ENCODE measurements at regions of chr4 and their contacts with region 1.

Region 1: DNA sequence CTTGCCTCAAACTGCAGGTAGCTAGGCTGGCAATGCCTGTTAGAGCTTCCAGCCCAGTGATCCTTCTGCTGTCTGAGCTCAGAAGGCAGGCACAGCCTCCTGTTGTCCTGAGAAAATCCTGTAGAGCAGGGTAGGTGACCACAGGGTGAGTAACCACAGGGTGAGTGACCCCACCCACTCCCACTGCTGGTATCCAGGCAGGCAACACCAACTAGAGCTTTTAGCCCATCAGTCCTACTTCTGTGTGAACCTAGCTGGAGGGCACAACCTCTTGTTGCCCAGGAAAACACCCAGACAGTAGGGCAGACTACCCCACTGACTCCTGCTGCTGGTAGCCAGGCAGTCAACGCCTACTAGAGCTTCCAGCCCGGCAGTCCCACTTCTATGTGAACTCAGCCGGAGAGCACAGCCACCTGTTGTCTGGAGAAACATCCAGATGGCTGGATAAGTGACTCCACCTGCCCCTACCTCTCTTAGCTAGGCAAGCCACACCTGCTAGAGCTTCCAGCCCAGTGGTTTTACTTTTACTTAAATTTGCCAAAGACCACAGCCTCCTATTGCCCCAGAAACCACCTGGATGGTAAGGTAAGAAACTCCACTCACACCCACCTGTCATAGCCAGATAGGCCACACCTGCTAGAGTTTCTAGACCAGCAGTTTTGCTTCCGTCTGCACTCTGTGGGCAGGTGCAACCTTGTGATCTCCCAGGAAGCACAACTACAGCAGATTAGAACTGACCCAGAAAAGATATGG is 371.6 kb downstream of the INPP4B start:
- DNase-seq: peak; percentile 93 to 98
- H3K4me3 ChIP-seq: peak overlapping the region; percentile 74; the same call in 1 of the 2 replicates
- H3K27ac ChIP-seq: peak overlapping the region; percentile 100
- H3K4me1 ChIP-seq: peaks cover 57% of the 10 kb centered on the region
- H3K27me3 ChIP-seq: no peaks in the 10 kb centered on the region
- CTCF ChIP-seq: no peak

Region 2: GRCh38 chr4:142126890-142127497 is 347.5 kb before region 1 on chr4:
- CTCF ChIA-PET with region 1: no interaction called
- POLR2A ChIA-PET with region 1: no interaction called
- intact Hi-C with region 1: loop called (anchors 10 kb)
- DNase-seq: peak; percentile 38 to 46
- H3K4me3 ChIP-seq: no peak overlapping the region
- H3K27ac ChIP-seq: no peak overlapping the region
- H3K4me1 ChIP-seq: no peaks in the 10 kb centered on the region
- H3K27me3 ChIP-seq: no peaks in the 10 kb centered on the region
- CTCF ChIP-seq: peak; percentile 89

Region 3: GRCh38 chr4:142379277-142380057 is 95.0 kb before region 1 on chr4:
- CTCF ChIA-PET with region 1: no interaction called
- POLR2A ChIA-PET with region 1: no interaction called
- intact Hi-C with region 1: loop called (anchors 1 kb)
- DNase-seq: peak; percentile 24 to 89
- H3K4me3 ChIP-seq: no peak overlapping the region
- H3K27ac ChIP-seq: peak overlapping the region; percentile 93
- H3K4me1 ChIP-seq: peaks cover 34% of the 10 kb centered on the region
- H3K27me3 ChIP-seq: no peaks in the 10 kb centered on the region
- CTCF ChIP-seq: no peak

Region 4: DNA sequence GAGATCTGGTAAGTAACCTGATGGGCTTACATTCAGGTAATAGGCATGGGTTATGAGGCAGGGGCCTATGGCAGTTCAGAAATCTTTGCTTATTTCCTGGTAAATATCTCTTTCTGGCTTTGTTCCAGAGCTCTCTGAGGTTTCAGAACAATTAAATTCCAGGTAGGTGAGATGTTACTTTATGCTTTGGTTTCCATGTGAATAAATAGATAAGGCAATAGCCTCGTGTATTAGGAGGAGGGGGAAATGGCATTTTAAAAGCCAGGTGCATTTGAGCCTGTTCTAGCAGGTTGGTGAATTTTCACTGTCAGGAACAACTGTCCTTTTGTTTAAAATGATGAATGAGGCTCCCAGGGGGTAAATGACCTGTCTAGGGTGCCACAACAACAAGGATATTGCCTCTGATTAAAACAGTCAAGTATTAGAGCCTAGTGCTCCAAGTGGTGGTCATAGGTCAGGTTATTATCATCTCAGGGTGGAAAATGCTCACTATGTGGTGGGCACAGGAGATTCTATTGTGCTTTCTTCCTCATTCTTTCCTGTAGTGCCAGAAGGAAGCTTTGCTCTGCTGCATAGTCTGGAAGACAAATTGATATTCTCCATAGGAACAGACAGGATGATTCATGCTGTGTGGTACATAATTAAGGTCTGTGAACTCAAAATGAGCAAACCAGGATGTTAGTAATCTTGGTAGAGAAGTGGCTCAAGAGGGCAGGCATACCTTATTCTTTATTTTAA is 75.4 kb after region 1 on chr4:
- CTCF ChIA-PET with region 1: interaction called, 5 read pairs
- POLR2A ChIA-PET with region 1: interaction called, 31 read pairs
- intact Hi-C with region 1: loop called (anchors 1 kb)
- DNase-seq: peak; percentile 67 to 98
- H3K4me3 ChIP-seq: no peak overlapping the region
- H3K27ac ChIP-seq: peak overlapping the region; percentile 99
- H3K4me1 ChIP-seq: peaks cover 48% of the 10 kb centered on the region
- H3K27me3 ChIP-seq: no peaks in the 10 kb centered on the region
- CTCF ChIP-seq: no peak

Region 5: GRCh38 chr4:142582340-142582739 is 107.8 kb after region 1 on chr4:
- CTCF ChIA-PET with region 1: no interaction called
- POLR2A ChIA-PET with region 1: no interaction called
- intact Hi-C with region 1: no loop called
- DNase-seq: no peak
- H3K4me3 ChIP-seq: no peak overlapping the region
- H3K27ac ChIP-seq: no peak overlapping the region
- H3K4me1 ChIP-seq: no peaks in the 10 kb centered on the region
- H3K27me3 ChIP-seq: no peaks in the 10 kb centered on the region
- CTCF ChIP-seq: no peak

Region 6: GRCh38 chr4:142778430-142778829 is 303.9 kb after region 1 on chr4:
- CTCF ChIA-PET with region 1: no interaction called
- POLR2A ChIA-PET with region 1: no interaction called
- intact Hi-C with region 1: no loop called
- DNase-seq: no peak
- H3K4me3 ChIP-seq: no peak overlapping the region
- H3K27ac ChIP-seq: no peak overlapping the region
- H3K4me1 ChIP-seq: peaks cover 6% of the 10 kb centered on the region; the same call in 1 of the 2 replicates
- H3K27me3 ChIP-seq: no peaks in the 10 kb centered on the region
- CTCF ChIP-seq: no peak

Region 7: DNA sequence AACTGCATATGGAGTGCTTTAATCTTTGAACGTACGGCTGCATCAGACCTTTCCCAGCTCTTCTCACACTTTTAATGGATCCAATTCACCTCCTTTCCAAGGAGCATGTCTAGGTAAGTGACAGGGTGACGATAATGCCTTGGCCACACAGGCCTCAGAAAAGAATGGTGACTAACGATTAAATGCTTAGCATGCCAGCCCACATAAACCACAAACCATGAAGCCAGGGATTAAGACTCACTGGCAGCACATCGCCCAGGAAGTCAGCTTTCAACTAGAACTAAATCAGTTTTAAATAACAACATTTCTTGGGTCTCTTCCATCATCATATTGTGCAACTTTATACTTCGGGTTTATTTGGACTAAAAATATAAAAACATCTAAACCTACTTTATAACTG is 342.9 kb after region 1 on chr4:
- CTCF ChIA-PET with region 1: no interaction called
- POLR2A ChIA-PET with region 1: no interaction called
- intact Hi-C with region 1: loop called (anchors 2 kb)
- DNase-seq: peak; percentile 59 to 80
- H3K4me3 ChIP-seq: peak overlapping the region; percentile 10; the same call in 1 of the 2 replicates
- H3K27ac ChIP-seq: peak overlapping the region; percentile 50
- H3K4me1 ChIP-seq: peaks cover 15% of the 10 kb centered on the region
- H3K27me3 ChIP-seq: no peaks in the 10 kb centered on the region
- CTCF ChIP-seq: no peak

Region 8: GRCh38 chr4:143335979-143336780 is 861.7 kb after region 1 on chr4:
- CTCF ChIA-PET with region 1: no interaction called
- POLR2A ChIA-PET with region 1: interaction called, 17 read pairs
- intact Hi-C with region 1: no loop called
- DNase-seq: peak; percentile 62 to 90
- H3K4me3 ChIP-seq: peak overlapping the region; percentile 88
- H3K27ac ChIP-seq: peak overlapping the region; percentile 78
- H3K4me1 ChIP-seq: no peaks in the 10 kb centered on the region
- H3K27me3 ChIP-seq: no peaks in the 10 kb centered on the region
- CTCF ChIP-seq: no peak

Measured in PC-9 (cell line).